Panc1 (cell line): ENCODE measurements at regions of chr3 and their contacts with region 1.

Region 1: DNA sequence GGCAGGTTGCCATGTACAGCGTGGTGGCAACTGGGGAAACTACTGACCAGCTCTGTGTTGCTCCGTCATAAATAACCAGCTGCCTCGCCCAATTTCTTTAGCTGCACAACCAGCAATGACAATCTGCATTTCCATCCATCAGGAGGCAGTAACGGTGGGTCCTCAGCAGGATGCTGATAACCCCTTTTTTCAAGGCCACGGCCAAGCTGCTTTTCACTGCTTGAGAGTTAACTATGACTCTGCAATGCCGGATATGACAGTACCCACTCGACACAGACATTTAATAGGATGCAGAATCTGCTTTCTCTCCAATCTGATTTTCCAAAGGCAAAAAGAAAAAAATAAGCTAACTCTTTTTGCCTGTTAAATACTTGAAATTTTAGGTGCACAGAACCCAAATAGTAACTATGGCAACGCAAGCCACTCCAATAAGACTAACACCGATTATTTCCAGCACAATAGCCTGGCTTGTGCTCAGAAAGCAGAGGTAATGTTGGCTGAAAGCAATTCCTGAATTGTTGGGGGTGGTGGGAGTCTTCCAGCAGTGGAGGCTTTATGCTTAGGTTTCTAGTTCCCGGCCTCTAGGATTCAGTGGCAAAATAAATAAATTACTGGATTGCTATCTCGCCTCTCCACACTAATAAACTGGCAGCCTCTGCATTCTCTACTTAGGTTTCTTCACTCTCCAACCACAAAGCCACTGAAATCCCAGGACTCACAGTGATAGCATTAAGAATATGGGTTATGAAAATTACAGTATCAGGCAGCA is 31.2 kb upstream of the SRGAP3 start:
- DNase-seq: no peak
- ATAC-seq: no peak
- H3K4me3 ChIP-seq: no peak overlapping the region
- H3K27ac ChIP-seq: no peak overlapping the region
- H3K4me1 ChIP-seq: no peaks in the 10 kb centered on the region
- H3K27me3 ChIP-seq: no peaks in the 10 kb centered on the region
- CTCF ChIP-seq: no peak

Region 2: DNA sequence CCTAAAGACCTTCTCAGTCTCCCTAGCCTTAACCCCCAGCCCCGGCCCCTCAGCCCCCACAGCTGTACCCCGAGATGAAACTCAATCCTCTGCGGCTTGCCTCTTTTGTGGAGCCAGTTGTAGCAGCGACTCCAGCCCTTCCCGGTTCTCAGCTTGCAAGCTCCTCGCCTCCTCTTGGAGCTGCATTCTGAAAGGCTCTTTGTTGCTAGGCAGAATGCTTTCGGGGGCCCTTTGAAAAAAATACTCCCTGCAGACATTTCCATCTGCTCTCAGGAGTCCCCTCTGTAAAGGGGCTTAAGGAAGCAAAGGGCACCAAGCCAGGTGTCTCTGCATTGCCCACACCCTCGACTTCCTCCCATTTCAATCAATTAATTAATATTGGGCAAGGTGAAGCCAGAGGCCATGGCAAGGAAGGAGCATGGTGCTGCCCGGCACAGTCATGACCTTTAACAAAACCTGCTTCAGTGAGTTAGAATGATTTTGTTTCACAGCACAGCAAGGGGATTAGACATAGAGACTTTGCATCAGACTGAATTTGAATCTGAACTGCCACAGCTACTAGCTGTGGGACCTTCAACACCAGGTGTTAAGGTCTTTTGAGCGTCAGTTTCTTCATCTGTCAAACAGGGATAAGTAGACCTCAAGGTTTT is 96.7 kb before region 1 on chr3:
- CTCF ChIA-PET with region 1: no interaction called
- POLR2A ChIA-PET with region 1: interaction called, 12 read pairs
- in situ Hi-C with region 1: no loop called
- intact Hi-C with region 1: no loop called
- DNase-seq: no peak
- ATAC-seq: no peak
- H3K4me3 ChIP-seq: no peak overlapping the region
- H3K27ac ChIP-seq: no peak overlapping the region
- H3K4me1 ChIP-seq: no peaks in the 10 kb centered on the region
- H3K27me3 ChIP-seq: no peaks in the 10 kb centered on the region; the same call in none of the 2 replicates
- CTCF ChIP-seq: no peak

Region 3: GRCh38 chr3:9229325-9229724 is 51.3 kb before region 1 on chr3:
- CTCF ChIA-PET with region 1: no interaction called
- POLR2A ChIA-PET with region 1: interaction called, 16 read pairs
- in situ Hi-C with region 1: no loop called
- intact Hi-C with region 1: no loop called
- DNase-seq: no peak
- ATAC-seq: no peak
- H3K4me3 ChIP-seq: no peak overlapping the region
- H3K27ac ChIP-seq: no peak overlapping the region
- H3K4me1 ChIP-seq: no peaks in the 10 kb centered on the region
- H3K27me3 ChIP-seq: no peaks in the 10 kb centered on the region; the same call in 1 of the 2 replicates
- CTCF ChIP-seq: no peak

Region 4: DNA sequence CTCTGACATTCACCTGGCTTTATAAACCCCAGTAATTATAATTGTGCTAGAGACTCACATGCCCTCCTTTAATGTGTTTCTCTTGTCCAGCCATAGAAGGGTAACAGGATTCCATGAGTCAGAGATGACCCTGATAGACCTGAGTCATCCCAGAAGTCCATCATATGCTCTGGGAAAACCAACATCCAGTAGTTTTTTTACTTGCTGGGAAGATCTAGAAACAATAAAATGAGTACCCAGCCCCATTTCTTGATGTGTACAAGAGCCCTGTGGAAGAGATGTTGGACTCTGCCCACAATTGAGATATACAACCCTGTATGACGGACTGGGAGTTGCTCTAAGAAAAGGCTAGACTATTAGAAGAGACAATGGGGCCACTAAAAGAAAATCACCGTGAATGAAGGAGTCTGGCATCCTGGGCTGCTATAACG is 59.9 kb after region 1 on chr3:
- CTCF ChIA-PET with region 1: no interaction called
- POLR2A ChIA-PET with region 1: no interaction called
- in situ Hi-C with region 1: no loop called
- intact Hi-C with region 1: no loop called
- DNase-seq: peak; percentile 17
- ATAC-seq: no peak
- H3K4me3 ChIP-seq: no peak overlapping the region
- H3K27ac ChIP-seq: no peak overlapping the region
- H3K4me1 ChIP-seq: no peaks in the 10 kb centered on the region
- H3K27me3 ChIP-seq: no peaks in the 10 kb centered on the region
- CTCF ChIP-seq: no peak

Region 5: DNA sequence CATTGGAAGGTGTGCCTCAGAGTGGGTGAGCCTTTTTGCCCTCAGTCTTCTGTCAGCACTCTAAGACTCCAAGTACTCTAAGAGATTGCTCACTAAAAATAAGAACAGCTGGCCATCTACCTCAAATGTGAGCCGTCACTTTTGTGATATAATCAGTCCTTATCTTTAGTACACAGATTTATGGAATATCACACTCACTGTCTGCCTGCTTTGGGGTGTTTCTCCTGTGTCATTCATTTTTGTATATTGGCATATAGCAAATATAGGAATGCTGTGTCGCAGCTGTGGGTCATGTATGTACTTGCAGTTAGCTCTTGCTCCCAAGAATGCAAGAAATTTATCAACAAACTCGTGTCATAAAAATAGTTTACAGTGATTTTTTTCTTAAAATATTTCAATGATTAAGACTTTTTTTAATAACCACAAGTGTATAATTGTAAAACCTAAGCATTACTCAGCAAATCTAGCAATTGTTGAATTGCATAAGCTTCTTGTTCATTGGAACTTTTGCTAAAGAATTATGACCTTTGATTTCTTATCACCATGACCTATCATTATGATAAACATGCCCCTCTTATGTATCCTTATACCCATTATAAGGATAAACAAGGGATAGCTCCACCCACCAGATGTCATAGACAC is 135.6 kb after region 1 on chr3:
- CTCF ChIA-PET with region 1: no interaction called
- POLR2A ChIA-PET with region 1: no interaction called
- in situ Hi-C with region 1: no loop called
- intact Hi-C with region 1: no loop called
- DNase-seq: no peak
- ATAC-seq: no peak
- H3K4me3 ChIP-seq: no peak overlapping the region
- H3K27ac ChIP-seq: no peak overlapping the region
- H3K4me1 ChIP-seq: peaks cover 25% of the 10 kb centered on the region
- H3K27me3 ChIP-seq: no peaks in the 10 kb centered on the region
- CTCF ChIP-seq: no peak